ENCODE measurements at regions of chr1 and their contacts with region 1.

Region 1: DNA sequence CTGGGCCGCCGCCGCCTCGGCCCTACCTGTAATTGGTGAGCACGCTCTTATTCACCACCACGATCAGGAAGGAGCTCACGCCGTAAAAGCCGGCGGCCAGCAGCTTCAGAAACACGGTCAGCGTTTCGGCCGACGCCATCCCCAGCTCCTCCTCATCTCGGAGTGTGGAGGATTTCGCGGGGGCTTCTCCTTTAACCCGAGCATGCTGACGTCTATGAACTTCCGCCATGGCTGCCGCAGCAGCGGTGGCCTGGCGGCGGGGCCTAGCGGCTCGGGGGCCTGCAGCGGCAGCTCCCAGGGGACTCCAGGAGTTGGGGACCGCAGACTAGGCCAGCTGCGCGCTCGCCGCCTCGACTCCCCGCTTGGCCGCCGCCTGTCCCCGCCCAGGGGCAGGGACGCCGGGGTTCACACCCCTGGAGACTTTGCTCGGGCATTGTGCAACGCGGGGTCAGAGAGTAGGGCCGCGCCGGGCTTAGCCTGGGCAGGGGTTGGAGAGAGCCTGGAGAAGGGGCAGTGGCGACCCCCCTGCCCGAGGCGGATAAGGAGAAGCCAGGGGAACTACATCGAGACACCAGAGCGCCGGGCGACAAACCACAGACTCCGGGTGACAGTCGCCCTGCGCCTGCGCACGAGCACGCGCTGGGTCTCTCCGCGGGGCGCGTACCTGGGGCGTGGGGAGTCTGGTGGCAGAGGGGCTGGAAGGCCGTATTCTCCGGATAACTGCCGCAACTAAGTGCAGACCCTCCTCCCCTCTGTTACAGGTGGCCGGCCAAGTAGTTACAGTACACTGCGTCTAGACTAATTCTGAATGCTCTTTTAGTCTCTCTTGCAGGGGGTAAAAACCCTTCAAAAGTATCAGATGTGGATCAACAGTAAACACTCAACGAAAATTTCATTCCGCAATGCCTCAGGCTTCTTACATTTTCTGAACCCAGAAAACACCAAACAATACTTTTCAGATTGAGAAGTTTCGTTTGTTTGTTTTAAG is at the start of gene SLC35D1:
- DNase-seq: peak; percentile 62 to 87 (median 83)
- ATAC-seq: peak; percentile 78
- H3K4me3 ChIP-seq: peak within 1 kb of the TSS; percentile 80 to 85
- H3K4me3 Mint-ChIP-seq: peak within 1 kb of the TSS; percentile 89
- H3K27ac ChIP-seq: peak within 1 kb of the TSS; percentile 90 to 96
- H3K27ac Mint-ChIP-seq: peak within 1 kb of the TSS; percentile 96
- H3K4me1 ChIP-seq: peaks cover 10% of the 10 kb centered on the region
- H3K4me1 Mint-ChIP-seq: peaks cover 35% of the 10 kb centered on the region
- H3K27me3 ChIP-seq: no peaks in the 10 kb centered on the region
- H3K27me3 Mint-ChIP-seq: no peaks in the 10 kb centered on the region
- CTCF ChIP-seq: no peak
- total RNA-seq, gene SLC35D1: 18.4 to 18.5 TPM

Region 2: DNA sequence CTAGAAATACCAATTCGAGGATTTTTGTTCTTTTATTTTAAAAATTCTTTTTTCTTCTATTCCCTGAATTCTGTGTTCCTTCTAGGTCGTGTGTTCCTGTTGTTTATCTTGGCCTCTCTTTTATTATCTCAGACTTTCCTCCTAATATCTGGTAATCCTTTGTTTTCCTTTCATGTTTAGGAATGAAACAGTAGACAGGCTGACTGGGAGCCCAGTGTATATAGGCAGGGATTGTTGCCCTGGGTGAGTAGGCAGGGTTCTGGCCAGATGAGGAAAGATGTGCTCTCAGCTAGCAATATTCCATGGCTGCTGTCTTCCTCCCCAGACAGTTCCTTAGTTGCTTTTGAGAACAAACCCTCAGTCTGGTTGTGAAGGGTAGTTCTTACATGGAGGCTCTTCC is 1423.2 kb before region 1 on chr1:
- CTCF ChIA-PET with region 1: no interaction called
- POLR2A ChIA-PET with region 1: no interaction called
- intact Hi-C with region 1: no loop called
- DNase-seq: no peak
- ATAC-seq: no peak
- H3K4me3 ChIP-seq: no peak overlapping the region
- H3K4me3 Mint-ChIP-seq: no peak overlapping the region
- H3K27ac ChIP-seq: no peak overlapping the region
- H3K27ac Mint-ChIP-seq: no peak overlapping the region
- H3K4me1 ChIP-seq: no peaks in the 10 kb centered on the region
- H3K4me1 Mint-ChIP-seq: no peaks in the 10 kb centered on the region
- H3K27me3 ChIP-seq: no peaks in the 10 kb centered on the region
- H3K27me3 Mint-ChIP-seq: no peaks in the 10 kb centered on the region
- CTCF ChIP-seq: no peak

Region 3: DNA sequence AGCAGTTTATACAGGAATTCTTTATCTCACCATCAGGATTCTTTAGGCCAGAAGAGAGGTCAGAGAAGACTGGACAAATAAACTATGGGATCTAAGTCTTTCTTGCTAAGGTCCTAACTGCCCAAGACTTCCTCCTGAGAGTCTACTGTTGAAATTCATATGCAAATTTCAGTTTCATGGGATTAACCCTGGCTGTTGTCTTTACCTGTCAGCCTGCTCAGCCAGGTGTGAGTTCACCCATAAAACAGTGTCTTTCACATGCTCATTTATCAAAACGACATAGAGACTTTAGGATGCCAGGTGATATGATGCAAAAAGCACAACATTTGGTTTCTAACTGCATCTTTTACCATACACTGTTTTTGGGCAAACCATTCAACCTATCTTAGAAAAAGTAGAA is 1050.4 kb before region 1 on chr1:
- CTCF ChIA-PET with region 1: no interaction called
- POLR2A ChIA-PET with region 1: no interaction called
- intact Hi-C with region 1: no loop called
- DNase-seq: no peak
- ATAC-seq: no peak
- H3K4me3 ChIP-seq: no peak overlapping the region
- H3K4me3 Mint-ChIP-seq: no peak overlapping the region
- H3K27ac ChIP-seq: no peak overlapping the region
- H3K27ac Mint-ChIP-seq: no peak overlapping the region
- H3K4me1 ChIP-seq: no peaks in the 10 kb centered on the region
- H3K4me1 Mint-ChIP-seq: no peaks in the 10 kb centered on the region
- H3K27me3 ChIP-seq: no peaks in the 10 kb centered on the region
- H3K27me3 Mint-ChIP-seq: peaks cover 15% of the 10 kb centered on the region
- CTCF ChIP-seq: no peak

Region 4: GRCh38 chr1:66809736-66810326 is 244.2 kb before region 1 on chr1:
- CTCF ChIA-PET with region 1: no interaction called
- POLR2A ChIA-PET with region 1: no interaction called
- intact Hi-C with region 1: no loop called
- DNase-seq: no peak
- ATAC-seq: no peak
- H3K4me3 ChIP-seq: no peak overlapping the region
- H3K4me3 Mint-ChIP-seq: no peak overlapping the region
- H3K27ac ChIP-seq: no peak overlapping the region
- H3K27ac Mint-ChIP-seq: no peak overlapping the region
- H3K4me1 ChIP-seq: no peaks in the 10 kb centered on the region
- H3K4me1 Mint-ChIP-seq: no peaks in the 10 kb centered on the region
- H3K27me3 ChIP-seq: no peaks in the 10 kb centered on the region
- H3K27me3 Mint-ChIP-seq: no peaks in the 10 kb centered on the region
- CTCF ChIP-seq: no peak

Region 5: DNA sequence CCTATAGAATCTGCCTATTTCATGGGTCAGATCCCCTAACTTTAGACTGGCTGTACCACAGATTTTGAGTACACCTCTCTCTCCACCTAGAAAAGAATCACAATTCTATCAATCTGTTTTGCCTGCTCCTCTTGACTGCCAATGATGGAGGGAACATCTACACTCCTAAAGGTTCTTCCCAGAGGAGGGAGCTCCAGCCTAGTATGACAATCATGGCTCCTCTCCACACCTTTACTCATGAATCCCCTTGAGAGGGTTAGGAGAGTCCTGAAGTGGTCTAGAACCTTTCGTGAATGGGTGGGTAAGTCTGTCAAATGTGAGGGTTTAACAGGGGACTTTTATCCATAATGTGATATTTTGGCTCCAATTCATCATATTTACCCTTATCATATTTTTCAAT is 177.4 kb before region 1 on chr1:
- CTCF ChIA-PET with region 1: no interaction called
- POLR2A ChIA-PET with region 1: no interaction called
- intact Hi-C with region 1: no loop called
- DNase-seq: peak in 1 of 9 experiments; percentile 1
- ATAC-seq: no peak
- H3K4me3 ChIP-seq: no peak overlapping the region
- H3K4me3 Mint-ChIP-seq: no peak overlapping the region
- H3K27ac ChIP-seq: no peak overlapping the region
- H3K27ac Mint-ChIP-seq: no peak overlapping the region
- H3K4me1 ChIP-seq: no peaks in the 10 kb centered on the region
- H3K4me1 Mint-ChIP-seq: no peaks in the 10 kb centered on the region
- H3K27me3 ChIP-seq: no peaks in the 10 kb centered on the region
- H3K27me3 Mint-ChIP-seq: no peaks in the 10 kb centered on the region
- CTCF ChIP-seq: no peak

Region 6: DNA sequence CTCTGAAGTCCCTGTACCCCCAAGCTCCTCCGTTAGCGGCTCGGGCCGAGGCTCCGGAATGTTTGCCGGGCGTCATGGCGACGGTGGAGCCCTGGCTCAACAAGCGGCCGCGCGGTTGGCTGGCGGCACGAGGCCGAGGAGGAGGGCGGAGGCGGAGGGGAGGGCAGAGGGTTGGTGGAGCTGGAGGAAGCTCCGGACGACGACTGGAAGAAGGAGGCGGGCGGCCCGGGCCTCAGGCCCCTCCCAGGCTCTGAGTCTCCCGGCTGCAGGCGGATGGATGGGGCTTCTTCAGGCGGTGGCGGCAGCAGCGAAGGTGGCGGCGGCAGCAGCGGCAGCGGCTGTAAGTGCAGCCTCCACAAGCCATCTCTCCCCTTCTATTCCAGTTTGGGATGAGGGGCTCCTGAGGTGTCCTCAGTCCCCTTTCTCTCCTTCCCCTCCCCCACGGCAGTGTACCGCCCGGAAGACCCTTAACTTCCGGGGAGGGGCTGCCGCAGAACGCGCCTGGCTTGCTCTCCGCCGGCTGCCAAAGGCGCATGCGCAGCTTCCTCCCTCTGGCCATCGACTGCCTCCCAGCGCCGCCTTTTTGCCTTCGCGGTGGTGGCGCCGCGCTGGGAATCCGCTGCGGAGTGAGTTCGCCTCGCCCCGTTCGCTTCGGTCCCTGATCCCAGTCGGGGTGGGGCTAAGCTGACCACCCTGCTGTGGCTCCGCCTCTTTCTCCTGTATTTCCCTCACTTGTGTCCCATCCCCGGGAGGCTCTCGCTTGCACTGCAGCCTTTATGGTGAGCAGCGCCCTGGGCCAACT is 129.1 kb before region 1 on chr1 and contains the starts of genes DNAI4 and MIER1:
- CTCF ChIA-PET with region 1: interaction called, 3 read pairs
- POLR2A ChIA-PET with region 1: interaction called, 6 read pairs
- intact Hi-C with region 1: loop called (anchors 1 to 2 kb)
- DNase-seq: peak; percentile 93 to 98 (median 96)
- ATAC-seq: peak; percentile 91
- H3K4me3 ChIP-seq: peak within 1 kb of the TSS; percentile 80 to 99
- H3K4me3 Mint-ChIP-seq: peak within 1 kb of the TSS; percentile 96
- H3K27ac ChIP-seq: peak within 1 kb of the TSS; percentile 95 to 100
- H3K27ac Mint-ChIP-seq: peak within 1 kb of the TSS; percentile 93
- H3K4me1 ChIP-seq: peaks cover 25% of the 10 kb centered on the region
- H3K4me1 Mint-ChIP-seq: peaks cover 46% of the 10 kb centered on the region
- H3K27me3 ChIP-seq: no peaks in the 10 kb centered on the region
- H3K27me3 Mint-ChIP-seq: no peaks in the 10 kb centered on the region
- CTCF ChIP-seq: no peak
- total RNA-seq, gene DNAI4: 4.9 to 5.1 TPM
- total RNA-seq, gene MIER1: 94.5 to 96.5 TPM

Region 7: DNA sequence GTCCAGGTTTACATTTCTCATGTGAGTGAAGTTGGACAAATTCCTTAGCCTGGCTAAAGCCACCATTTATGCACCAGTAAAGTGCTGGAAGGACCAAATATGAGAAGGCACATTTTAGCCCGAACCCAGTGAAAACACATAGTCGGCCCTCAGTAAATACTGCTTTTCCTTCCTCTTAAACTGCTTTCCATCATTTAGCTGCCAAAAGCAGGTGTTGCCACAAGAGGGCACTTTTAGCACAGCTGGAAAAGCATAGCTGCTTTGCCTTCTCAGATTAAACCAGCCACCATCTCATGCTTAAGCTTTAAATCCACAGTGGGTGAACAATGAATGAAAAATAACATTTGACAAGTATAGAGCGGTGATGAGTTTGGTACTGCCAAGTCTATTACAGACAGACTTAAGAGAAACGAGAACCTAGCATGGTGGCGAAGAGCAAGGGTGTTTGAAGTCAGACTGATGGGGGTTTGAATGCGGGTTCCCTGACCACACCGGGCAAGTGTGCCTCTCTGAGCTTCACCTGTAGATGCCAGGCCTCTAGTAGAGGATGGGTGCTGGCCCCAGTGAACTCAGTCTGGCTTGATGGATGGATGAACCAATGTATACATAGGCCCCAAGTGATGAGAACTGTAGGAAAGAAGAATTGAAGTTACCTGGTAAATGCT is 57.9 kb before region 1 on chr1:
- CTCF ChIA-PET with region 1: interaction called, 8 read pairs
- POLR2A ChIA-PET with region 1: interaction called, 5 read pairs
- intact Hi-C with region 1: loop called in 1 of 2 experiments (anchors 5 kb)
- DNase-seq: peak; percentile 29 to 74 (median 57)
- ATAC-seq: peak; percentile 86
- H3K4me3 ChIP-seq: no peak overlapping the region
- H3K4me3 Mint-ChIP-seq: no peak overlapping the region
- H3K27ac ChIP-seq: no peak overlapping the region
- H3K27ac Mint-ChIP-seq: peak overlapping the region; percentile 32
- H3K4me1 ChIP-seq: peaks cover 5% of the 10 kb centered on the region
- H3K4me1 Mint-ChIP-seq: peaks cover 21% of the 10 kb centered on the region
- H3K27me3 ChIP-seq: no peaks in the 10 kb centered on the region
- H3K27me3 Mint-ChIP-seq: no peaks in the 10 kb centered on the region
- CTCF ChIP-seq: peak; percentile 70

Region 8: GRCh38 chr1:67142931-67143330 is 88.9 kb after region 1 on chr1:
- CTCF ChIA-PET with region 1: interaction called, 20 read pairs
- POLR2A ChIA-PET with region 1: interaction called, 6 read pairs
- intact Hi-C with region 1: loop called (anchors 2 kb)
- DNase-seq: peak in 2 of 9 experiments; percentile 34 to 60
- ATAC-seq: peak; percentile 84
- H3K4me3 ChIP-seq: no peak overlapping the region
- H3K4me3 Mint-ChIP-seq: peak overlapping the region; percentile 53
- H3K27ac ChIP-seq: no peak overlapping the region
- H3K27ac Mint-ChIP-seq: peak overlapping the region; percentile 89
- H3K4me1 ChIP-seq: peaks cover 16% of the 10 kb centered on the region
- H3K4me1 Mint-ChIP-seq: peaks cover 37% of the 10 kb centered on the region
- H3K27me3 ChIP-seq: no peaks in the 10 kb centered on the region
- H3K27me3 Mint-ChIP-seq: no peaks in the 10 kb centered on the region
- CTCF ChIP-seq: no peak

Region 9: GRCh38 chr1:67685067-67685557 is 631.0 kb after region 1 on chr1 and contains the start of gene GADD45A:
- CTCF ChIA-PET with region 1: no interaction called
- POLR2A ChIA-PET with region 1: no interaction called
- intact Hi-C with region 1: loop called (anchors 5 to 10 kb)
- DNase-seq: peak; percentile 85 to 98 (median 93)
- ATAC-seq: peak; percentile 85
- H3K4me3 ChIP-seq: peak within 1 kb of the TSS; percentile 79 to 88
- H3K4me3 Mint-ChIP-seq: peak within 1 kb of the TSS; percentile 100
- H3K27ac ChIP-seq: peak within 1 kb of the TSS; percentile 61 to 66
- H3K27ac Mint-ChIP-seq: peak within 1 kb of the TSS; percentile 96
- H3K4me1 ChIP-seq: peaks cover 16% of the 10 kb centered on the region
- H3K4me1 Mint-ChIP-seq: peaks cover 25% of the 10 kb centered on the region
- H3K27me3 ChIP-seq: no peaks in the 10 kb centered on the region
- H3K27me3 Mint-ChIP-seq: no peaks in the 10 kb centered on the region
- CTCF ChIP-seq: no peak
- total RNA-seq, gene GADD45A: 194 to 196 TPM